Dorsolateral prefrontal cortex (tissue), 120 donors: ENCODE measurements at regions of chr11 and their contacts with region 1.

Region 1: GRCh38 chr11:117443266-117444195 is 115.9 kb downstream of the CEP164 start:
- DNase-seq: peak; percentile 53 to 81 (median 67)
- H3K4me3 ChIP-seq: peak overlapping the region in 1 of 59 donors; percentile 27
- H3K27ac ChIP-seq: peak overlapping the region in 42 of 59 donors; percentile 2 to 77 (median 48)
- H3K27me3 ChIP-seq: no peaks in the 10 kb centered on the region
- CTCF ChIP-seq: peak in 55 of 56 donors; percentile 7 to 87 (median 71)

Region 2: GRCh38 chr11:116782728-116783127 is 660.8 kb before region 1 on chr11:
- intact Hi-C with region 1: no loop called
- DNase-seq: no peak
- H3K4me3 ChIP-seq: no peak overlapping the region
- H3K27ac ChIP-seq: no peak overlapping the region
- H3K27me3 ChIP-seq: no peaks in the 10 kb centered on the region
- CTCF ChIP-seq: no peak

Region 3: DNA sequence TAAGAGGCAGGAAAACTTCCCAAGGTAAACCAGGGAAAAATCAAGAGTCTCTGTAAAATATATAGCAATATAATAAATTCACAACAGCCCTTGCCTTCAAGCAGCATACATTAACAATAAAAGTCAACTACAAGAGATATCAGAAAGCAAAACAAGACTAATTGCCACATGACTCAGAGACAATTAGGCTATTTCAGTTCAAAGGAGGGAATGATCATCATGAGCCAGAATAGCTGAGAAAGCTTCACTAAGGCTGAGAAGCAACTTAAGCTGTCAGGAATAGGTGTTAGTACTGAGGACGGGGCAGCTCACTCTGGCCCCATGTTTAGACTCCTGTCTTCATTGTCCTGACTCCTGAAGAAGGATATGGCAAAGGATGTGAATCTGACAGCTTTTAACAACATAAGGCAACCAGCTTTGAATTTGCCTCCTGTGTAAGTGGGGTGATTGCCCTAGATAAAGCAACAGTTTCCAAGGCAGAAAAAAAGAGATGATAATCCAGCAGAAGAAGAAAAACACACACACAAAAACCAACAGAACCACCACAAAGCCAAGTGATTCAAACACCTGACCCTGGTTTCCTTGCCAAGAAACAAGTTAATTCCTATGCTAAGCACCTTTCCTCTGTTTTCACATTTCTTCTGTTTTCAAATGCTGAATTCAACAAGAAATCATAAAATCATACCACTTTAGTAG is 406.1 kb before region 1 on chr11:
- intact Hi-C with region 1: no loop called
- DNase-seq: no peak
- H3K4me3 ChIP-seq: peak overlapping the region in 5 of 59 donors; percentile 2 to 27 (median 10)
- H3K27ac ChIP-seq: peak overlapping the region; percentile 29 to 100 (median 88)
- H3K27me3 ChIP-seq: no peaks in the 10 kb centered on the region
- CTCF ChIP-seq: no peak

Region 4: DNA sequence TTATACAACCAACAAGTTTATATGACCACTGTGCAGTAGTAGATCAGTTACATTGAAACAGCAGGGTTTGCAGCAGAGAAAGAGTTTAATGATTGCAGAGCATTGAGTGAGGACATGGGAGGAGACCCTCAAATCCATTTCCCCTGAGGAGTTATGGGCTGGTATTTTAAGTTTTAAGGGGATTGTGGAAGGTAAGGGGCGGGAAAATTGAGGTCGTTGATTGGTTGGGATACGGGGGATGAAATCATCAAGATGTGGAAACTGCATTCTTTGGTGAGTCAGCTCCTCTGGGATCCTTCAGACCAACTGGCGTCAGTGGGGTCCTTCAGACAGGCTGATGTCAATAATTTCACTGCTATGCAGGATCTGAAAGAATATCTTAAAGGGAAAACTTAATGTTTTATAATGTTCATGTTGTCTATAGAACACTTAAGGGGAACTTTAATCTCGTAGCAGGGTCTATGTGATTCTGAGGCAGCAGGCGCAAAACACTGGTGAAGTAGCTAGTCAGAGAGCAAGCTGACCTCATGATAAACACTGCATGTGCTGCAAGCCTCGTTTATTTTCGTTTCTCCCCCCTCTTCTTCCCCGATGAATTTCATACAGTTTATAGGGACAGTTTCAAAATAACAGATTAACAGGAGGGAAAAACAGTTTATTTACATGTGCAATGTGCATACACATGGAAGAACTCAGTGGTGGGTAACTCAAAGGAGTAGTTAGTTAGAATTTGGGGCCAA is 169.8 kb before region 1 on chr11:
- intact Hi-C with region 1: no loop called
- DNase-seq: no peak
- H3K4me3 ChIP-seq: no peak overlapping the region
- H3K27ac ChIP-seq: no peak overlapping the region
- H3K27me3 ChIP-seq: no peaks in the 10 kb centered on the region
- CTCF ChIP-seq: no peak

Region 5: DNA sequence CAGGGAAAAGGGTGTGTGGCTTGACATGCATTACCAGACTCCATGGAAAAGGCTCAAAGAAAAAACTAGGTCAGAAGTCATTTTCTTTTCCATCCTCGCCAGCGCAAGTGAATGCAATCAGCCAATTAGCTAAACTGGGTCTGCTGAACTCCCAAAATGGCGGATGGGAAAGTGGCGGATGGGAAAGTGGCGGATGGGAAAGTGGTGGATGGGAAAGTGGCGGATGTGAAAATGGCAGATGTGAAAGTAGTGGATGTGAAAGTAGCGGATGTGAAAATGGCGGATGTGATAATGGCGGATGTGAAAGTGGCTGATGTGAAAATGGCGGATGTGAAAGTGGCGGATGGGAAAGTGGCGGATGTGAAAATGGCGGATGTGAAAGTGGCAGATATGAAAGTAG is 42.5 kb after region 1 on chr11:
- intact Hi-C with region 1: loop called in 1 of 2 experiments (anchors 2 kb)
- DNase-seq: no peak
- H3K4me3 ChIP-seq: no peak overlapping the region
- H3K27ac ChIP-seq: no peak overlapping the region
- H3K27me3 ChIP-seq: no peaks in the 10 kb centered on the region
- CTCF ChIP-seq: no peak

Region 6: GRCh38 chr11:117544130-117544800 is 100.7 kb after region 1 on chr11:
- intact Hi-C with region 1: loop called in 1 of 2 experiments (anchors 5 kb)
- DNase-seq: no peak
- H3K4me3 ChIP-seq: no peak overlapping the region
- H3K27ac ChIP-seq: peak overlapping the region in 2 of 59 donors; percentile 7 to 16
- H3K27me3 ChIP-seq: no peaks in the 10 kb centered on the region
- CTCF ChIP-seq: no peak

Region 7: GRCh38 chr11:117663821-117664220 is 220.3 kb after region 1 on chr11:
- intact Hi-C with region 1: loop called in 1 of 2 experiments (anchors 10 kb)
- DNase-seq: peak in 7 of 10 donors; percentile 66 to 81 (median 76)
- H3K4me3 ChIP-seq: peak overlapping the region in 33 of 59 donors; percentile 0 to 49 (median 17)
- H3K27ac ChIP-seq: peak overlapping the region; percentile 73 to 99 (median 96)
- H3K27me3 ChIP-seq: no peaks in the 10 kb centered on the region
- CTCF ChIP-seq: peak in 19 of 56 donors; percentile 7 to 47 (median 19)

Region 8: DNA sequence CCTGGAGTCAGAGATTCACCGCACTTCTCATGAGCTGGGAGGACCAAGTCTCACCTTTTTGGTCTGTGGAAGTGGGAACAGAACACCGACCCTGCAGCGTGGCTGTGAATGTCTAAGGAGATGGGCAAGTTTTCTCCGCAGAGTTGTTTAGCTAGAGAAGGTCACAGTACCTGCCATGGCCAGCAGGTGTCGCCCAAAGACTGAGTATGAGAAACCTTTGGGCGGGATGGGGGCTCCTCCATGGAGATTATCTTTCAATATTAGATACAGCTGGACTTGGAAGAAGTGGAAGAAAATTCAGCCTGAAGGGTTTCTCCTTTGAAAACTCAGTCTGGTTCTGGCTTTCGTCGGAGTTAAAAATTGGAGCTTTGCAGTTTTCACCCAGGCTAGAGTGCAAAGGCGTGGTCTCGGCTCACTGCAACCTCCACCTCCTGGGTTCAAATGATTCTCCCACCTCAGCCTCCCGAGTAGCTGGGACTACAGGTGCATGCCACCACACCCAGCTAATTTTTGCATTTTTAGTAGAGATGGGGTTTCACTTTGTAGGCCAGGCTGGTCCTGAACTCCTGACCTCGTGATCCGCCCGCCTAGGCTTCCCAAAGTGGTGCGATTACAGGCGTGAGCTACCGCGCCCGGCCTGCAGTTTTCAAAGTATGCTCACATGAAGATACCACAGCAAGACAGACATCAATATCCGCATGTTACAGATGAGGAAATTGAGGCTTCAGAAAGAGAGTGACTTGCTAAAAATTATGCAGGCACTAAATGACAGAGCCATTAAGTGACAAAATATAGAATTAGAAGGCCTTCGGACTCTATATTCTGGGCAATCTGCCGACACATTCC is 364.2 kb after region 1 on chr11:
- intact Hi-C with region 1: loop called (anchors 2 to 5 kb)
- DNase-seq: peak; percentile 77 to 95 (median 84)
- H3K4me3 ChIP-seq: no peak overlapping the region
- H3K27ac ChIP-seq: no peak overlapping the region
- H3K27me3 ChIP-seq: no peaks in the 10 kb centered on the region
- CTCF ChIP-seq: peak; percentile 82 to 98 (median 94)